ENCODE measurements at regions of chr16 and their contacts with region 1.

Region 1: GRCh38 chr16:67883872-67884261 is 818 bp upstream of the NRN1L start:
- DNase-seq: peak; percentile 76
- H3K4me3 Mint-ChIP-seq: no peak overlapping the region
- H3K27ac Mint-ChIP-seq: no peak overlapping the region
- H3K4me1 Mint-ChIP-seq: no peaks in the 10 kb centered on the region
- H3K27me3 Mint-ChIP-seq: no peaks in the 10 kb centered on the region

Region 2: GRCh38 chr16:67781565-67781921 is 102.3 kb before region 1 on chr16:
- CTCF ChIA-PET with region 1: no interaction called
- intact Hi-C with region 1: no loop called
- DNase-seq: peak; percentile 54
- H3K4me3 Mint-ChIP-seq: no peak overlapping the region
- H3K27ac Mint-ChIP-seq: peak overlapping the region; percentile 67
- H3K4me1 Mint-ChIP-seq: peaks cover 32% of the 10 kb centered on the region
- H3K27me3 Mint-ChIP-seq: no peaks in the 10 kb centered on the region

Region 3: GRCh38 chr16:67872786-67873537 is 10.9 kb before region 1 on chr16 and contains the start of gene EDC4:
- CTCF ChIA-PET with region 1: interaction called, 12 read pairs
- intact Hi-C with region 1: no loop called
- DNase-seq: peak; percentile 86
- H3K4me3 Mint-ChIP-seq: peak within 1 kb of the TSS; percentile 92
- H3K27ac Mint-ChIP-seq: peak within 1 kb of the TSS; percentile 87
- H3K4me1 Mint-ChIP-seq: peaks cover 27% of the 10 kb centered on the region
- H3K27me3 Mint-ChIP-seq: no peaks in the 10 kb centered on the region
- total RNA-seq, gene EDC4: 72.2 to 78.7 TPM

Region 4: GRCh38 chr16:67910158-67910557 is 26.3 kb after region 1 on chr16:
- CTCF ChIA-PET with region 1: interaction called, 11 read pairs
- intact Hi-C with region 1: no loop called
- DNase-seq: peak; percentile 83
- H3K4me3 Mint-ChIP-seq: no peak overlapping the region
- H3K27ac Mint-ChIP-seq: peak overlapping the region; percentile 56
- H3K4me1 Mint-ChIP-seq: peaks cover 21% of the 10 kb centered on the region
- H3K27me3 Mint-ChIP-seq: no peaks in the 10 kb centered on the region

Region 5: DNA sequence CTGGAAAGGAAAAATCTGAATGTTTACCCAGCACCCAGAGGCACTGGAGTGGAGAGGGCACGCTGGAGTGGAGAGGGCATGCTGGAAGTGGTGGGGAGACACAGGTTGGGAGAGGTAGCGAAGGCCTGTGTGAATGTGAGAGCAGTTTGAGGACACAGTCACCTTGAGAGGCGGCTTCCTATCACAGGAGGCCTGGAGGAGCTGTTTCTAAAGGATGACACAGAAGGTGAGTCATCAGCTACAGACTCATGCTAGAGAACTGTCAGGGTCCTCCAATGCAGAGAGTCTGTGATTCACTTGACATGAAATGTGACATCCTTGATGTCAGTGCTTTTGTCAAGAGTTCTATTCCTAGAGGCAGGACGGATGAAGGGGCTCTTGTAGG is 34.0 kb after region 1 on chr16:
- CTCF ChIA-PET with region 1: interaction called, 25 read pairs
- intact Hi-C with region 1: loop called (anchors 2 kb)
- DNase-seq: peak; percentile 81
- H3K4me3 Mint-ChIP-seq: no peak overlapping the region
- H3K27ac Mint-ChIP-seq: peak overlapping the region; percentile 89
- H3K4me1 Mint-ChIP-seq: peaks cover 38% of the 10 kb centered on the region
- H3K27me3 Mint-ChIP-seq: no peaks in the 10 kb centered on the region

Region 6: GRCh38 chr16:67928561-67929364 is 44.9 kb after region 1 on chr16:
- CTCF ChIA-PET with region 1: interaction called, 25 read pairs
- intact Hi-C with region 1: loop called (anchors 1 kb)
- DNase-seq: peak; percentile 91
- H3K4me3 Mint-ChIP-seq: no peak overlapping the region
- H3K27ac Mint-ChIP-seq: no peak overlapping the region
- H3K4me1 Mint-ChIP-seq: peaks cover 2% of the 10 kb centered on the region
- H3K27me3 Mint-ChIP-seq: no peaks in the 10 kb centered on the region

Region 7: DNA sequence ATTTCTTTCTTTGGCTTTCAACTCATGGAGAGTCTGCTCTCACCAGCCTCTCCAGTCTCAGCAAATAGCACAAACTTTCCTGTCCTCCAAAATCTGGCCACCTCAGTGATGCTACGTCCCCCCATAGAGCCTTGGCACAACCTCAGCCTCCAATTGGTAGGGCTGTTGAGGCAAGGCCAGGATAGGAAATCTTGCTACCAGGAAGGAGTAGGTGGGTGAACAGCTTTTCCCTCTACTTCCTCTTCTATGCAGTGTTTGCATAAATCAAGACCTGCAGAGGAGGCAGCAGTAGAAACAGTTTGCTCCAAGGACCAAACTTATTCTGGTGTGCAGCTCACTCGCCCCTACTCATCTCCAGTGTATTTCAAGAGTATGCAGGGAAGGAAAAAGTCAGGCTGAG is 116.1 kb after region 1 on chr16:
- CTCF ChIA-PET with region 1: no interaction called
- intact Hi-C with region 1: no loop called
- DNase-seq: peak; percentile 25
- H3K4me3 Mint-ChIP-seq: peak overlapping the region; percentile 80
- H3K27ac Mint-ChIP-seq: peak overlapping the region; percentile 94
- H3K4me1 Mint-ChIP-seq: peaks cover 49% of the 10 kb centered on the region
- H3K27me3 Mint-ChIP-seq: no peaks in the 10 kb centered on the region

Region 8: DNA sequence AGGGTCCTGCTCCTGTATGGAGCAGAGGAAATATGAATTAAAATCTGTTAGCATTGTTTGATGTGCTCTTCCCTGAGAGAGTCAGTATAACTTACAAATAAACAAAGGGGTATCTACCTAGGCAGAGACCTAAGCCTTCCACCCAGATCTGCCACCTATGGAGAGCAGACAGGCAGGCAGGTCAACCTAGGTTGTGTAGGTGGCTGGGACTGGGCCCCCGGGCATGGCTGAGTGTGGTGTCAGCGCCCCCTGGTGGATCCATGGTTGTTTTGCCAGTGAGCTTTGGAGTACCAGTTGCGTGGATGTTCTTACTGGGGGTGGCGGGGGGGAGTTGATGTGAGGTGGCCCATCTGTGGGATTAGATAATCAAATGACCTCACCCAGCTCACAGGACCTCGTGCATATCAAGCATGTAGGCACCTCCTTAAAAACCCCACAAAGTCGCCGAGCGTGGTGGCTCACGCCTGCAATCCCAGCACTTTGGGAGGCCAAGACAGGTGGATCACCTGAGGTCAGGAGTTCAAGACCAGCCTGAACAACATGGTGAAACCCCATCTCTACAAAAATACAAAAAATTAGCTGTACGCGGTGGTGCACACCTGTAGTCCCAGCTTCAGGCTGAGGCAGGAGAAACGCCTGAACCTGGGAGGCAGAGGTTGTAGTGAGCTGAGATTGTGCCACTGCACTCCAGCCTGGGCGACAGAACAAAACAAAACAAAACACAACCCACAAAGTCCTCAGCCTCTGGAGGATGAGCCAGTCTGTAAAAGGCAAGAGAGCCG is 156.8 kb after region 1 on chr16:
- CTCF ChIA-PET with region 1: interaction called, 18 read pairs
- intact Hi-C with region 1: no loop called
- DNase-seq: peak; percentile 95
- H3K4me3 Mint-ChIP-seq: no peak overlapping the region
- H3K27ac Mint-ChIP-seq: no peak overlapping the region
- H3K4me1 Mint-ChIP-seq: peaks cover 7% of the 10 kb centered on the region
- H3K27me3 Mint-ChIP-seq: no peaks in the 10 kb centered on the region

Region 9: GRCh38 chr16:68064791-68065365 is 181.0 kb after region 1 on chr16:
- CTCF ChIA-PET with region 1: no interaction called
- intact Hi-C with region 1: loop called (anchors 2 kb)
- DNase-seq: peak; percentile 88
- H3K4me3 Mint-ChIP-seq: no peak overlapping the region
- H3K27ac Mint-ChIP-seq: no peak overlapping the region
- H3K4me1 Mint-ChIP-seq: peaks cover 61% of the 10 kb centered on the region
- H3K27me3 Mint-ChIP-seq: no peaks in the 10 kb centered on the region